Colonic mucosa (tissue), 4 donors: ENCODE measurements at regions of chrX and their contacts with region 1.

Region 1: GRCh38 chrX:34299451-34299967 is 167.4 kb upstream of the FAM47A start:
- DNase-seq: no peak
- H3K4me3 ChIP-seq: no peak overlapping the region
- H3K27ac ChIP-seq: no peak overlapping the region
- H3K4me1 ChIP-seq: no peaks in the 10 kb centered on the region
- H3K27me3 ChIP-seq: no peaks in the 10 kb centered on the region
- CTCF ChIP-seq: no peak

Region 2: GRCh38 chrX:33434256-33435092 is 865.0 kb before region 1 on chrX:
- intact Hi-C with region 1: loop called (anchors 10 kb)
- DNase-seq: peak; percentile 59
- H3K4me3 ChIP-seq: no peak overlapping the region
- H3K27ac ChIP-seq: no peak overlapping the region
- H3K4me1 ChIP-seq: no peaks in the 10 kb centered on the region
- H3K27me3 ChIP-seq: no peaks in the 10 kb centered on the region
- CTCF ChIP-seq: peak; percentile 82

Region 3: GRCh38 chrX:34426334-34426733 is 126.8 kb after region 1 on chrX:
- intact Hi-C with region 1: no loop called
- DNase-seq: no peak
- H3K4me3 ChIP-seq: no peak overlapping the region
- H3K27ac ChIP-seq: no peak overlapping the region
- H3K4me1 ChIP-seq: no peaks in the 10 kb centered on the region
- H3K27me3 ChIP-seq: no peaks in the 10 kb centered on the region
- CTCF ChIP-seq: no peak